CD4-positive, alpha-beta T cell (primary cell): ENCODE measurements at regions of chr9 and their contacts with region 1.

Region 1: DNA sequence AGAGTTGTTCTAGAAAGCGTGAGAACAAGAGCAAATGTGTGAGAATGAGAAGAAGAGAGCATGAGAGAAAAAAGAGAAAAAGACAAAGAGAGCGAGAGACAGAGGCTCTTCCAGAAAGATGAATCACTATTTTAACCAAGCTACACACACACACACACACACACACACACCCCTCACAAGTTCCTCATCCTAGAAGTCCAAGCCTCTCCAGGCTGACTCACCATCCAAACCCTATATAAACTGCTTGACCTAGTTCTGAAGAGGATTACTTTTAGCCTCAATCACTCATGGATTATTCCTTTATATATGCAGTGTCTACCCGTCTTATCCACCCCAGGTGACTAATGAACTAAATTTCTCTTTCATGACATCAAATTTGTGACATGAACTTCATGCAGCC is 37.6 kb downstream of the C9orf57 start:
- DNase-seq: peak in 2 of 14 experiments; percentile 14 to 39
- ATAC-seq: no peak
- H3K4me3 ChIP-seq: no peak overlapping the region
- H3K4me3 Mint-ChIP-seq: no peak overlapping the region
- H3K27ac ChIP-seq: no peak overlapping the region
- H3K27ac Mint-ChIP-seq: no peak overlapping the region
- H3K4me1 ChIP-seq: peaks cover 4% of the 10 kb centered on the region
- H3K4me1 Mint-ChIP-seq: no peaks in the 10 kb centered on the region
- H3K27me3 ChIP-seq: no peaks in the 10 kb centered on the region
- H3K27me3 Mint-ChIP-seq: no peaks in the 10 kb centered on the region
- CTCF ChIP-seq: no peak

Region 2: GRCh38 chr9:71604197-71605063 is 418.4 kb before region 1 on chr9:
- CTCF ChIA-PET with region 1: interaction called, 5 read pairs
- POLR2A ChIA-PET with region 1: no interaction called
- intact Hi-C with region 1: loop called (anchors 1 kb)
- DNase-seq: peak; percentile 60 to 91 (median 77)
- ATAC-seq: peak; percentile 75
- H3K4me3 ChIP-seq: no peak overlapping the region
- H3K4me3 Mint-ChIP-seq: no peak overlapping the region
- H3K27ac ChIP-seq: no peak overlapping the region
- H3K27ac Mint-ChIP-seq: no peak overlapping the region
- H3K4me1 ChIP-seq: no peaks in the 10 kb centered on the region
- H3K4me1 Mint-ChIP-seq: no peaks in the 10 kb centered on the region
- H3K27me3 ChIP-seq: no peaks in the 10 kb centered on the region
- H3K27me3 Mint-ChIP-seq: no peaks in the 10 kb centered on the region
- CTCF ChIP-seq: peak; percentile 94

Region 3: DNA sequence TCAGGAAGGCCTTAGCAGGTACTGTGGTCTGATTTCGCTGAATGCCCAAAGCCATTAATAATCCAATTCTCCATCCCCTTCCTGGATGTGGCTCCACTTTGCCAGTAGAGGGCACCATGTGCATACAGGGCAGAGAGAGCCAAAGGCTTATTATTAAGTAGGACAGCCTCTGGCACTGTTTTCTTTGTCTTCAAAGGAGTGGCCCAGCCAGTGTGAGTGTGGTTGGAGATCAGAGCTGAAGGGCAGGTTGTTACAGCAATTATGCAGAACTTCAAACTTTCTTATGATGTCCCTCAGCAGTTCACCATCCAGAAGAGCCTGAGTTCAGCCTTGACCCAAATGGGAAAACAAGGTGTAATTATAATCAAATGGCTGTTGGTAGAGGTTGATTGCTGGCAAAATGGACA is 215.9 kb before region 1 on chr9:
- CTCF ChIA-PET with region 1: interaction called, 12 read pairs
- POLR2A ChIA-PET with region 1: no interaction called
- intact Hi-C with region 1: loop called (anchors 1 to 2 kb)
- DNase-seq: peak; percentile 31 to 81 (median 46)
- ATAC-seq: peak; percentile 90
- H3K4me3 ChIP-seq: no peak overlapping the region
- H3K4me3 Mint-ChIP-seq: no peak overlapping the region
- H3K27ac ChIP-seq: no peak overlapping the region
- H3K27ac Mint-ChIP-seq: no peak overlapping the region
- H3K4me1 ChIP-seq: peaks cover 10% of the 10 kb centered on the region
- H3K4me1 Mint-ChIP-seq: peaks cover 14% of the 10 kb centered on the region
- H3K27me3 ChIP-seq: no peaks in the 10 kb centered on the region
- H3K27me3 Mint-ChIP-seq: no peaks in the 10 kb centered on the region
- CTCF ChIP-seq: peak; percentile 90

Region 4: DNA sequence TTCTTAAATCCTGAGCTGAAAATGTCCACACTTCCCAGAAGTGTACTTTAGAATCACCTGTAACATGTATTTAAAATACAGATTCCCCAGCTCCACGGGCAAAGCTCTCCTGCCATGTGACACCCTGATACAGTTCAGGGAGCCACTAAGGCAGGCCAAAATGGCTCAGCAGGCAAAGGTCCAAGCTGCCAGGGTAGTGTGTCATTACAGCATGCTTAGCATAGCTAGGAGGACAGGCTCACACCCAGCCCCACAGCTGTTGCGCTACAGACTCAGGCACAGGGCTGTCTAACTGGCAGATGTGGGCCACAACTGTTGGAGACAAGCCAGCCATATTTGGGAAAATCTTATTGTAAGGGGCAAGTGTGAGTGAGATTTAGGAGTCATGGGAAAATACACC is 38.4 kb before region 1 on chr9:
- CTCF ChIA-PET with region 1: no interaction called
- POLR2A ChIA-PET with region 1: no interaction called
- intact Hi-C with region 1: loop called in 1 of 2 experiments (anchors 5 kb)
- DNase-seq: no peak
- ATAC-seq: no peak
- H3K4me3 ChIP-seq: no peak overlapping the region
- H3K4me3 Mint-ChIP-seq: no peak overlapping the region
- H3K27ac ChIP-seq: no peak overlapping the region
- H3K27ac Mint-ChIP-seq: no peak overlapping the region
- H3K4me1 ChIP-seq: no peaks in the 10 kb centered on the region
- H3K4me1 Mint-ChIP-seq: no peaks in the 10 kb centered on the region
- H3K27me3 ChIP-seq: no peaks in the 10 kb centered on the region
- H3K27me3 Mint-ChIP-seq: no peaks in the 10 kb centered on the region
- CTCF ChIP-seq: no peak

Region 5: GRCh38 chr9:72048850-72049249 is 26.0 kb after region 1 on chr9:
- CTCF ChIA-PET with region 1: no interaction called
- POLR2A ChIA-PET with region 1: no interaction called
- intact Hi-C with region 1: no loop called
- DNase-seq: no peak
- ATAC-seq: no peak
- H3K4me3 ChIP-seq: no peak overlapping the region
- H3K4me3 Mint-ChIP-seq: no peak overlapping the region
- H3K27ac ChIP-seq: no peak overlapping the region
- H3K27ac Mint-ChIP-seq: no peak overlapping the region
- H3K4me1 ChIP-seq: no peaks in the 10 kb centered on the region
- H3K4me1 Mint-ChIP-seq: no peaks in the 10 kb centered on the region
- H3K27me3 ChIP-seq: peaks cover 0 to 2% of the 10 kb centered on the region in 2 experiments
- H3K27me3 Mint-ChIP-seq: peaks cover 3% of the 10 kb centered on the region
- CTCF ChIP-seq: no peak